Activated naive CD4-positive, alpha-beta T cell treated with anti-CD3 and anti-CD28 coated beads for 36 hours (primary cell): ENCODE measurements at regions of chr20 and their contacts with region 1.

Region 1: GRCh38 chr20:9616833-9617489 is 102.6 kb downstream of the LAMP5 start:
- DNase-seq: peak; percentile 66
- H3K4me3 Mint-ChIP-seq: no peak overlapping the region
- H3K27ac Mint-ChIP-seq: no peak overlapping the region
- H3K4me1 Mint-ChIP-seq: no peaks in the 10 kb centered on the region
- H3K27me3 Mint-ChIP-seq: peaks cover 27% of the 10 kb centered on the region

Region 2: GRCh38 chr20:9912858-9913434 is 296.0 kb after region 1 on chr20:
- CTCF ChIA-PET with region 1: interaction called, 40 read pairs
- intact Hi-C with region 1: loop called (anchors 1 kb)
- DNase-seq: peak; percentile 40
- H3K4me3 Mint-ChIP-seq: no peak overlapping the region
- H3K27ac Mint-ChIP-seq: no peak overlapping the region
- H3K4me1 Mint-ChIP-seq: no peaks in the 10 kb centered on the region
- H3K27me3 Mint-ChIP-seq: peaks cover 24% of the 10 kb centered on the region

Region 3: DNA sequence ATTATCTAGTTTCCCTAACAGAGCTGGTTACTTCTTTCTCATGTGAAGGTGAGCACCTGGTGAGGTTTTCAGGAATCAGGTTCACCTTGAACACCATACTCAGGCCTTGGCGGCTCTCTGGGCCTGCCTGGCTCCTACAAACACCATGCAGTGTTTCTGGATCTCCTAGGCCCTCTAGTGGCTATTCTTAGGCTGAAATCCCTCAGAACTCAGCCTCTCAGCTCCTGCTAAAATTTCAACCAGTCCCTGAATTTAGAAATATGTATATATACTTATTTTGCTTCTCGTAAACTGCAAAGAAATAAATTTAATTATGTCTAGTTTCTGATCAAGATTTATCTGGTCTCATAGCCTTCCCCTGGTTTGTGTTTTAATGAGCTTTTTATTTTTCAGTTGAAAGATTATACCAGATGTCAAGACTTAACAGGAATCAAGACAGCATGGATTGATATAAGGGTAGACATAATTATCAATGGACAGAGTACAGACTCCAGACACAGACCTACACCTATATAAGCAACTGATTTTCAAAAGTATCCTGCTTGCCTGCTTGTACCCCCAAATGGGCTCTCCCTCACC is 473.7 kb after region 1 on chr20:
- CTCF ChIA-PET with region 1: interaction called, 18 read pairs
- intact Hi-C with region 1: loop called (anchors 1 kb)
- DNase-seq: peak; percentile 27
- H3K4me3 Mint-ChIP-seq: no peak overlapping the region
- H3K27ac Mint-ChIP-seq: no peak overlapping the region
- H3K4me1 Mint-ChIP-seq: no peaks in the 10 kb centered on the region
- H3K27me3 Mint-ChIP-seq: peaks cover 3% of the 10 kb centered on the region

Region 4: DNA sequence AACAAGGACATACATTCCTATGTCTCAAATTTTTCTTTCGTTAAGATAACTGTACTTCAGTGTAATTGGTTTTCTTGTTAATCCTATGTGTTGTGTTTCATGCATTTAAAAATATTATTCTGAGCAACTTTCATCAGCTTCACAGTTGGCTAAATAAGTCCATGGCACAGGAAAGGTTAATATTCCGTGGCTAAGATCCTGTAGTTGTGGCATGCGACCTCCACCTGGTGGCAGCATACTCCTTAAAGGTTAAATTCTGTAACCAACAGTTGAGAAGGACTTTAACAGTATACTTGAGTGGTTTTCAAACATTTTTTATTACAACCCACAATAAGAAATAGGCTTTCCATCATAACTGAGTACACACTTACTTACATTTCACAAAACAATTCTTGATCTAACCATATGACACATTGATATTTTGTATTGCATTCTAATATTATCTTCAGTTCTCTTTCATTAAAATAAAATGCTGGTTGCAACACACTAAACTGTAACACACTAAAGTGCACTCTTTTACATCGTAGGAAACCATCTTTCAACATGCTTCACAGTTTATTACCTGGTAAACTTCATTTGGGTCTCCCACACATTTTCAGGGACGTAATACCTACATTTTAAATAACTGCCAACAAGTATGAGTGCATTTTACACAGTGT is 936.5 kb after region 1 on chr20:
- CTCF ChIA-PET with region 1: no interaction called
- intact Hi-C with region 1: loop called (anchors 10 kb)
- DNase-seq: peak; percentile 74
- H3K4me3 Mint-ChIP-seq: no peak overlapping the region
- H3K27ac Mint-ChIP-seq: no peak overlapping the region
- H3K4me1 Mint-ChIP-seq: peaks cover 37% of the 10 kb centered on the region
- H3K27me3 Mint-ChIP-seq: no peaks in the 10 kb centered on the region